Heart left ventricle (tissue), 16 donors: ENCODE measurements at regions of chr12 and their contacts with region 1.

Region 1: GRCh38 chr12:29929295-29929694 is 145.6 kb upstream of the TMTC1 start:
- DNase-seq: no peak
- ATAC-seq: no peak
- H3K4me3 ChIP-seq: no peak overlapping the region
- H3K27ac ChIP-seq: no peak overlapping the region
- H3K4me1 ChIP-seq: no peaks in the 10 kb centered on the region
- H3K27me3 ChIP-seq: no peaks in the 10 kb centered on the region
- CTCF ChIP-seq: no peak
- POLR2A ChIP-seq: no peak

Region 2: DNA sequence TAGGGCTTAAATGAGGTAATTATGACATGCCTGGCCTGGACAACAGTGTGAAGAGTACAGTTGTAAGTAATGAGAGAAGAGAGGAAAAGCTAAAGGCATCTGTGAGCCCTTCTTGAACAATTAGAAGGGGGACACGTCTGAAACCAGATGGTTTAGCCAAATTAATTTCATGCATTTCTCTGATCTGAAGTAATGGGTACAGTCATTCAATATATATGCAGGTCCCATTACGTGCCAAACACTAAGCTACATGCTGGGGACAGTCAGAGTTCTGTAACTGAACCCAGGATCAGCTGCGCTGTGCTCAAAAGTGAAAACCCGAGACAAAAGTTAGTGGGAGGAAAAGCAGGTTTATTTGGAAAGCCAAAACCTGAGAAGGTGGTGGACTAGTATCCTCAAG is 61.7 kb after region 1 on chr12:
- intact Hi-C with region 1: loop called in 1 of 10 experiments (anchors 2 kb)
- DNase-seq: no peak
- ATAC-seq: no peak
- H3K4me3 ChIP-seq: no peak overlapping the region
- H3K27ac ChIP-seq: no peak overlapping the region
- H3K4me1 ChIP-seq: no peaks in the 10 kb centered on the region
- H3K27me3 ChIP-seq: no peaks in the 10 kb centered on the region
- CTCF ChIP-seq: no peak
- POLR2A ChIP-seq: no peak